PC-9 (cell line): ENCODE measurements at regions of chr2 and their contacts with region 1.

Region 1: DNA sequence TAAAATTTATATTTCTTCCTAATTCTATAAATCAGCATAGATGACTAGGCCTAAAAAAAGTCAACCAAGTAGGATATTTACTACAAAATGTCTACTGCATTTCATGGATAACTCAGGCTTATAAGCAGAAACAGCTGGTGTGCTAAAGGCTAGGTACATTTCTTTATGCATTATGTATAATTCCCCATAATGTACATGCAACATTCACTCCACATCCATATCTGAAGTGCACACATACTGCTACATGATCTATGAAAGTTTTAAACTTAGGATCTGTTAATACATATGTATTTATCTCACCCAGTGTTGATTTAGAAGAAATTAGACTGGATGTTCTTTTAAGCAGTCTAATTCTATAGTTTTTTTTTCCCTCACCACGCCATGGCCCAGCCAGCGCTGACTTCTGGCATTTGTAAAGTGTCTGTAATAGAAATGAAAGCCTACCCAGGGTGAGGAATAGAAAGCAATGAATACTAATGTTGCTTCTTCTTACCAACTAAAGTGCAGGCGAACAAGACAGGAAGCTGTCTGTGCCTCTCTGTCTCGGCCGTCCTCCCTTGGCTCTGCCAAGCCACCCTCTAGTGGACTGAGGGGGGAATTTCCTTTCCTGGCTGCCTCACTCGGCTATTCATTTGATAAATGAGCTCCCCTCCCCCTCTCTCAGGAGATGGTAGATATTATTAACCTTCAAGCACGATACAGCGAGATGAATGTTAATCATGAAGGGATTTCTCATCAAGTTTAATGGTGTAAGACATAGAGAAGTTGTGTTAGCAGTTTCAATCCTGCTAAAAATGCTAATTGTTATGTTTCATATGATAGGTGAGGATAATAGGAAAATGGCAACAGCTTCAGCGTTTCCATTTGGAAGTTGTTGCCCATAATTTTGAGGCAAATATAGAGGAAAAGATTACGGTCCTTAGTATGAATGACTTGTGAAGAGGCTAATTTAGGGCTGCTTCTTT is 384.5 kb downstream of the MTX2 start:
- DNase-seq: peak in 1 of 2 experiments; percentile 64
- H3K4me3 ChIP-seq: no peak overlapping the region
- H3K27ac ChIP-seq: no peak overlapping the region
- H3K4me1 ChIP-seq: no peaks in the 10 kb centered on the region
- H3K27me3 ChIP-seq: peaks cover 8% of the 10 kb centered on the region; the same call in 1 of the 2 replicates
- CTCF ChIP-seq: peak; percentile 84

Region 2: DNA sequence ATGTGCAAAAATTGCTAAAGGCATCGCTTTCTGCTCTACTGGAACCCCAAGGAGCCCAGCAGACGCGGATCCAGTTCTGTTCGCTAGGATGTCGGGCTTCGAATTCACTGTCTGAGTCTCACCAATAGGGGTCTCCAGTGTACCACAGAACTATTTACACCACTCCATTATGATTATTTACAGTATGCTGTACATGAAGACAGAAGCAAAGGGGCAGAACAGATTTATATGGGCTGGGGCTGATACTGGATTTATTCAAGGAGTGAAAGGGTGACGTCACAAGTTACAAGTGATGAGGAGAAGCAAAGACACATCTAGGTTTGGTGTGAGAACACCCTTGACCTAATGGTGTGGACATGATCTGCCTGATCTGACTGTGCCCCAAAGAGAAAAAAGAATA is 1286.9 kb before region 1 on chr2:
- CTCF ChIA-PET with region 1: no interaction called
- POLR2A ChIA-PET with region 1: no interaction called
- intact Hi-C with region 1: loop called (anchors 10 kb)
- DNase-seq: peak in 1 of 2 experiments; percentile 18
- H3K4me3 ChIP-seq: no peak overlapping the region
- H3K27ac ChIP-seq: no peak overlapping the region
- H3K4me1 ChIP-seq: no peaks in the 10 kb centered on the region
- H3K27me3 ChIP-seq: peaks cover 15% of the 10 kb centered on the region
- CTCF ChIP-seq: peak; percentile 89

Region 3: DNA sequence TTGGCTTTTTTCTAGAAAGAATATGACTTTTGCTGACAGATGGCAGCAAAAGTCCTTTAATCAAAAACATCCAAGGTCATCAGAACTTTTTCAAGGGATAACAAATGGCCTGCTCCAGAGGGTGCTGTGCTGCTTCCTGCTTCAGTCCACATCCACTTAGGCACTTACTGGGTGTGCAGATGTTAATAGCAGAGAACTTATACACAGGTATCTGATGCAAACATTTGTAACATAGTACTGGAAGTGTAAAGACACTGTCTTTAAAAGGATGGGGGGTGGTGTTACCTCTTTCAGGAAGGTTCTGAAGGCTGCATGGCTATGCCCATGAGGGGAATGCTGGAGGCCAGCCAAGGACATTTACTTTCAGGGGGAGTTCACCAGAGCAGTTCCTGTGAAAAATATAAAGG is 518.7 kb before region 1 on chr2:
- CTCF ChIA-PET with region 1: interaction called, 11 read pairs
- POLR2A ChIA-PET with region 1: no interaction called
- intact Hi-C with region 1: loop called (anchors 1 kb)
- DNase-seq: no peak
- H3K4me3 ChIP-seq: no peak overlapping the region
- H3K27ac ChIP-seq: no peak overlapping the region
- H3K4me1 ChIP-seq: no peaks in the 10 kb centered on the region
- H3K27me3 ChIP-seq: peaks cover 21% of the 10 kb centered on the region
- CTCF ChIP-seq: no peak; the same call in 1 of the 2 replicates

Region 4: GRCh38 chr2:176333685-176334084 is 320.1 kb before region 1 on chr2:
- CTCF ChIA-PET with region 1: no interaction called
- POLR2A ChIA-PET with region 1: no interaction called
- intact Hi-C with region 1: loop called (anchors 10 kb)
- DNase-seq: no peak
- H3K4me3 ChIP-seq: no peak overlapping the region
- H3K27ac ChIP-seq: no peak overlapping the region
- H3K4me1 ChIP-seq: no peaks in the 10 kb centered on the region
- H3K27me3 ChIP-seq: no peaks in the 10 kb centered on the region
- CTCF ChIP-seq: no peak

Region 5: DNA sequence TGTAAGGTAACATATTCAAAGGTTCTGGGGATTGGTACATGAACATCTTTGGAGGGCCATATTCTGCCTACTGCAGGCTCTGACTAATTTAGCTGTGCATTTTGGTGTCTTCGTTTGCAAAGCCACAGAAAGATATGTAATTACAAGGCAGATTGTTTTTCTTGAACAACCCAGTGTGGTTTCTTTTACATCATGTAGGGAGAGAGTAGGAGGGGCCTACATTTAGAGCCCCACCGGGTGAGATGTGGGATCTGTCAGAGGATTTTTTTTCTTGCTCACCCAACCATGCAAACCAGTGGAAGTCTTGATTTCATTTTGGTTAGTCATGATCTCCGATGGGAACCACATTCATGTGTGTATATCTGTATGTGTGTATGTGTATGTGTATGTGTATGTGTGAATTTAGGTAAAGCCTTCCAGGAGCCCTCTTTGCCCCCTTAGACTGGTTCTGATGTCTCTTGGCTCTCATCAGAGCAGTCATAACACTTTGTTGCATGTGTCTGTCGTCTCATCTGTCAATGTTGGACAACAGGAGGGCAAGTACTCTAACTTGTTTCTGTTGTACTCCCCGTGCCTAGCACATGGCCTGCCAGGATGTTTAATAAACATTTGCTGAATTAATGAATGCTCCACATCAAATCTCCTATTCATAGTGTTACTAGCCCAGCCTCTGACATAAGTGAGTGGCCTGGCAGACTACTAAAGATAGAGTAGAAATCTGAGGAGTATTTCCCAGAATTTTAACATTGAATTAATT is 144.6 kb before region 1 on chr2:
- CTCF ChIA-PET with region 1: no interaction called
- POLR2A ChIA-PET with region 1: no interaction called
- intact Hi-C with region 1: no loop called
- DNase-seq: no peak
- H3K4me3 ChIP-seq: no peak overlapping the region
- H3K27ac ChIP-seq: no peak overlapping the region
- H3K4me1 ChIP-seq: no peaks in the 10 kb centered on the region
- H3K27me3 ChIP-seq: no peaks in the 10 kb centered on the region
- CTCF ChIP-seq: no peak

Region 6: DNA sequence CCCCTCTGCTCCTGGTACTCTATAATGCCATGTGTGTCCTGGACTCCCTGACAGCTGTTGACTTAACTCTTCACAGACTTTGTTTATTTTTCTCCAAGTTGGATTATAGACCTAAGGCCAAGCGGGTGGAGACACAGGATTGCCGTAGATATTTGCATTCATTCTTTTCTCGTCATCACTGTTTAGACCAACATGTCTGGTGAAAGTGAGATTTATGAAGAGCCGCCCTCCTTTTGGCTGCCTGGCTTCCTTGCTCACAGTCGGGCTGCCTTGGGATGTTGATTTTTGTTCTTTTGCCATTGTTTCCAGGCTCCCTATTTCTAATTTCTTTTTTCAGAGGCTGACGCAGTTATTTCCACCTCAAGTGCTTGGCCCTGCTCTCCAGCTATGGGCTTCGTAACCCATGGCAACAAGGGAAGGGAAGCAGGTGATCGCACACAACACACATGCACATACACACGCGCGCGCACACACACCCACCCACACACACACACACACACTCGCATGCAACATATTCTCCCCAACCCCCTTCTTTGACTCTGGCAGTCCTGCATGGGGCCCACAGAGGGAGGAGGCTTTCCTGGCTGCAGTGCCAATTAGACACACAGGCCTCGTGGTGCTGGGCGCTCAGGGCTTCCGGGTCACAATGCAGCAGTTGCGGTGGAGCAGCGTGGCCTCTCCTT is 88.0 kb before region 1 on chr2:
- CTCF ChIA-PET with region 1: interaction called, 12 read pairs
- POLR2A ChIA-PET with region 1: no interaction called
- intact Hi-C with region 1: no loop called
- DNase-seq: no peak
- H3K4me3 ChIP-seq: no peak overlapping the region
- H3K27ac ChIP-seq: no peak overlapping the region
- H3K4me1 ChIP-seq: peaks cover 23% of the 10 kb centered on the region
- H3K27me3 ChIP-seq: no peaks in the 10 kb centered on the region
- CTCF ChIP-seq: no peak

Region 7: DNA sequence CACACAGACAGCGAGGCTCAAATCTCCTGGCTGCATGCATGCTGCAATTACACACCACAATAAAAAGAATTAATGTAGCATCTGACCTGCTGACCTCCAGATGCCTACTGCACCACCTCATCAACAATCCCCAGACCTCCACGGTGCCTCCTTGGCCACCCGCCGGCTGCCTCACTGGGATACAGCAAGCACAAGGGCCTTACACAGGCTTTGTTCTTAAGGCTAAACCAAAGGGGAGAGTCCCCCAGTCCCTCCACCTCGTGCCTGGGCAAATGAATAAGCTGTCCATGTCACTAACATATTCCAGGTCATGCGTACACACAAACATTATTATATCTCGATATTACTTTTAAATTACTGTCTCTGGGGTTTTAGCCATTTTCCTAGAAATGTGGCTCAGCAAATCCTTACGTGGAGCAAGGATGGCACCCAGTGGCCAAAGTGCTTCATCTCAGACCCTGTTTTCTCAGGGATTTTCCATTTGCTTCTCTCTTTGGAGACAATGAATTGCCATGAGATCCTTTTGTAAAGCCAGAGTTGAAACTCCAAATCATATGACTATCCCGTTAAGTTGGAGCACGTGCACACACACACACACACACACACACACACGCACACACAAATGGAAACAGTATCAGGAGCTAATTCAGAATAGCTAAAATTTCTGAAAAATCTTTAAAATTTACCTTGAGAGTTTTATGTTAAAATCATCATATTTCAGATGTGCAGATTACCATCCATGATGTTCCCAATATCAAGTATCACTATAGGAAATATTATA is 1105.0 kb after region 1 on chr2:
- CTCF ChIA-PET with region 1: no interaction called
- POLR2A ChIA-PET with region 1: no interaction called
- intact Hi-C with region 1: loop called (anchors 10 kb)
- DNase-seq: peak in 1 of 2 experiments; percentile 53
- H3K4me3 ChIP-seq: no peak overlapping the region
- H3K27ac ChIP-seq: no peak overlapping the region
- H3K4me1 ChIP-seq: no peaks in the 10 kb centered on the region
- H3K27me3 ChIP-seq: no peaks in the 10 kb centered on the region
- CTCF ChIP-seq: peak; percentile 76